ENCODE measurements at regions of chr5 and their contacts with region 1.

Region 1: GRCh38 chr5:54944364-54944763 is 41.0 kb downstream of the ESM1 start:
- DNase-seq: peak; percentile 59
- H3K27ac ChIP-seq: no peak overlapping the region
- CTCF ChIP-seq: peak; percentile 75

Region 2: GRCh38 chr5:54912021-54912420 is 32.3 kb before region 1 on chr5:
- CTCF ChIA-PET with region 1: interaction called, 11 read pairs
- POLR2A ChIA-PET with region 1: no interaction called
- DNase-seq: no peak
- H3K27ac ChIP-seq: no peak overlapping the region
- CTCF ChIP-seq: no peak

Region 3: GRCh38 chr5:54932789-54933188 is 11.6 kb before region 1 on chr5:
- CTCF ChIA-PET with region 1: interaction called, 17 read pairs
- POLR2A ChIA-PET with region 1: no interaction called
- DNase-seq: no peak
- H3K27ac ChIP-seq: no peak overlapping the region
- CTCF ChIP-seq: no peak

Region 4: GRCh38 chr5:54959673-54960418 is 15.5 kb after region 1 on chr5:
- CTCF ChIA-PET with region 1: interaction called, 17 read pairs
- POLR2A ChIA-PET with region 1: no interaction called
- DNase-seq: no peak
- H3K27ac ChIP-seq: no peak overlapping the region
- CTCF ChIP-seq: no peak

Region 5: GRCh38 chr5:54965806-54966205 is 21.4 kb after region 1 on chr5:
- CTCF ChIA-PET with region 1: interaction called, 17 read pairs
- POLR2A ChIA-PET with region 1: no interaction called
- DNase-seq: no peak
- H3K27ac ChIP-seq: no peak overlapping the region
- CTCF ChIP-seq: no peak

Region 6: GRCh38 chr5:55146543-55147151 is 202.3 kb after region 1 on chr5:
- CTCF ChIA-PET with region 1: interaction called, 28 read pairs
- POLR2A ChIA-PET with region 1: no interaction called
- DNase-seq: peak; percentile 87
- H3K27ac ChIP-seq: no peak overlapping the region
- CTCF ChIP-seq: peak; percentile 98

Region 7: GRCh38 chr5:55159763-55160492 is 215.6 kb after region 1 on chr5 and contains the start of gene GPX8:
- CTCF ChIA-PET with region 1: interaction called, 48 read pairs
- POLR2A ChIA-PET with region 1: no interaction called
- DNase-seq: peak; percentile 87
- H3K27ac ChIP-seq: no peak within 1 kb of the TSS
- CTCF ChIP-seq: peak; percentile 83

Region 8: DNA sequence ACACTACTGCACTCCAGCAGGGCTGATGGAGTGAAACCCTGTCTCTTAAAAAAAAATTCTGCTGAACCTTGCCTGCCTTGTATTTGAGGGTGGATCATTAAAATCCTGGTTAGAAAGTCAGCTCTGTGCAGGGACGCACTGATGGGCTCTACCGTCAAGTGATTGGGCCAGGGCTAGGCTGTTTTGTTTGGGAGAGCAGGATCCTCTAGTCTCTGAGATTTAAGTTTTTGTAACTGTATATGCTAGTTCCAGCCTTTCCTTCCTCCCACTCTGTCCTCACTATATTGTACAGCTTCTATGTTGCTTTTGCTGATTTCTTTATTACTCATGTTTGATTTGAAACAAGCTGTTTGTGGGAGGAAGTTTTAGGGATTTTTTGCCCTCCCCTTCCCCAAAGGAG is 805.0 kb after region 1 on chr5:
- CTCF ChIA-PET with region 1: no interaction called
- POLR2A ChIA-PET with region 1: no interaction called
- DNase-seq: no peak
- H3K27ac ChIP-seq: no peak overlapping the region
- CTCF ChIP-seq: no peak

Measured in RWPE1 (cell line).